Uterus (tissue), 4 donors: ENCODE measurements at regions of chr10 and their contacts with region 1.

Region 1: GRCh38 chr10:31031558-31032257 is at the start of gene ZNF438:
- DNase-seq: peak; percentile 95 to 98
- H3K4me3 ChIP-seq: peak within 1 kb of the TSS; percentile 64 to 71
- H3K27ac ChIP-seq: peak within 1 kb of the TSS; percentile 100
- H3K4me1 ChIP-seq: peaks cover 6 to 7% of the 10 kb centered on the region in 2 donors
- H3K27me3 ChIP-seq: no peaks in the 10 kb centered on the region
- CTCF ChIP-seq: peak; percentile 38 to 82 (median 60)
- POLR2A ChIP-seq: peak; percentile 78 to 94
- total RNA-seq, gene ZNF438: 5.8 to 24.6 (median 18.4) TPM

Region 2: GRCh38 chr10:31603235-31604087 is 571.8 kb after region 1 on chr10:
- intact Hi-C with region 1: loop called (anchors 2 kb)
- DNase-seq: peak; percentile 97 to 99
- H3K4me3 ChIP-seq: peak overlapping the region; percentile 49 to 57
- H3K27ac ChIP-seq: peak overlapping the region; percentile 85 to 96
- H3K4me1 ChIP-seq: peaks cover 0 to 9% of the 10 kb centered on the region in 2 donors
- H3K27me3 ChIP-seq: no peaks in the 10 kb centered on the region
- CTCF ChIP-seq: peak in 2 of 4 experiments; percentile 7 to 69
- POLR2A ChIP-seq: peak; percentile 26 to 83